Esophagus squamous epithelium (tissue), 5 donors: ENCODE measurements at regions of chr9 and their contacts with region 1.

Region 1: DNA sequence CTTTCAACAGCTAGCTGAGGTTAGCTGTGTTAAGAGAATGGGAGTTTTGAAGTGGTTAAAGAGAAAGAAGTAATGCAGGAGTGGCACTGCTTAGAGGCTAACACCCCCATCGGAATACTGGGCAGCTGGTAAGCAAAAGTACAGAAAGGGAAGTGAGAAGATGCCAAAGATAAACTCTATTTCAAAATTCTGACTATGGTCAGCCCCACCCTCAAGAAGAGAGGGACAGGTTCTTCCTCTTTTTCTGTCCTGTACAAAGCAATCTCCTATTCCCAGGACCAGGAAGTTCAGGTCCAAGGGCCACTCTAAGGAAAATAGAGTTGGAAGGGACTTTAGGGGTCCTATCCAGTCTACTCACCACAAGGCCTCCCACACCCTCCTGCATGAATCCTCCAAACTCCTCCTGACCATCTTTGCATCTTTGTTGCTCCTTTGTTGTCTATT is 45.9 kb upstream of the JAK2 start:
- DNase-seq: no peak
- H3K4me3 ChIP-seq: no peak overlapping the region
- H3K27ac ChIP-seq: peak overlapping the region in 2 of 4 donors; percentile 27 to 44
- H3K4me1 ChIP-seq: peaks cover 32 to 79% (median 32%) of the 10 kb centered on the region in 3 donors
- H3K27me3 ChIP-seq: no peaks in the 10 kb centered on the region
- CTCF ChIP-seq: no peak
- POLR2A ChIP-seq: no peak

Region 2: DNA sequence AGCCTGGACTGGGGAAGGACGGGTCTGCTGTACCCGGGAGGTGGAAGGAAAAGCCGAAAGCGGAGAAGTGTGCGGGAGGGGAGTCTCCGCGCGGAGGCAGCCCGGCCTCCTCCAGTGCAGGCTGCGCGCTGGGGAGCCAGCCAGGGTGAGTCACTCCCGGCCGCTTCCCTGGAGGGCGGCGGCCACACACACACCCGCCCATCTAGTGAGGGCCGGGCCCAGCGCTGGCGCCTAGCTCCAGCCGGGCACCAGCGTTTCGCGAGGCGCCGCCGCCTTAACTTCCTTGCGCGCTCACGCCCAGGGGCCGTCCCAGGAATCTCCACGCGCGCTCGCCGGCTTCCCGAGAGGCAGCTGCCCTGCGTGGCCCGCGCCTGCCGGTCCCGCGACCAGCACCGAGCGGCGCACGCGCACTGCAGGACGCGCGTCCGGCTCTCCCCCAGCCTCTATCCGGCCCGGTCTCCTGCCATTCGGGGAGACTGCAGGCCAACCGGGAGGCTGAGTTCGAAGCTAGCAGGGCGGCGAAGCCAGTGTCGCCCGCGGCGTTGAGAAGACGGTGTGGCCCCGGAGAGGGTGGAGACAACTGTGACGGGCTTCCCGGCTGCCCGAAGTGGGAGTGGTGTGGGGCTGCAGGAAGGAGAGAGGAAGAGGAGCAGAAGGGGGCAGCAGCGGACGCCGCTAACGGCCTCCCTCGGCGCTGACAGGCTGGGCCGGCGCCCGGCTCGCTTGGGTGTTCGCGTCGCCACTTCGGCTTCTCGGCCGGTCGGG is 45.7 kb after region 1 on chr9 and contains the start of gene JAK2:
- intact Hi-C with region 1: loop called (anchors 10 kb)
- DNase-seq: peak; percentile 66
- H3K4me3 ChIP-seq: peak within 1 kb of the TSS; percentile 65 to 92 (median 88)
- H3K27ac ChIP-seq: peak within 1 kb of the TSS; percentile 97 to 98 (median 98)
- H3K4me1 ChIP-seq: peaks cover 19 to 58% (median 27%) of the 10 kb centered on the region in 3 donors
- H3K27me3 ChIP-seq: no peaks in the 10 kb centered on the region
- CTCF ChIP-seq: peak in 5 of 6 experiments; percentile 25 to 38 (median 26)
- POLR2A ChIP-seq: peak in 2 of 4 donors; percentile 79 to 85
- total RNA-seq, gene JAK2: 11.1 to 18.9 (median 11.9) TPM